A549 (cell line): ENCODE measurements at regions of chr14 and their contacts with region 1.

Region 1: GRCh38 chr14:56491299-56492285 is 88.0 kb upstream of the TMEM260 start:
- DNase-seq: peak; percentile 21 to 72
- ATAC-seq: peak; percentile 70 to 84
- H3K4me3 ChIP-seq: no peak overlapping the region
- H3K27ac ChIP-seq: no peak overlapping the region
- H3K4me1 ChIP-seq: no peaks in the 10 kb centered on the region
- CTCF ChIP-seq: peak; percentile 76
- EP300 ChIP-seq: no peak
- POLR2A ChIP-seq: no peak
- RAD21 ChIP-seq: peak; percentile 70 to 75

Region 2: GRCh38 chr14:56271970-56272369 is 219.6 kb before region 1 on chr14:
- CTCF ChIA-PET with region 1: no interaction called
- POLR2A ChIA-PET with region 1: no interaction called
- DNase-seq: no peak
- ATAC-seq: peak in 1 of 2 experiments; percentile 48; a peak in 1 of 6 replicates
- H3K4me3 ChIP-seq: no peak overlapping the region
- H3K27ac ChIP-seq: 0 out of 6 replicates have a peak overlapping the region, but pooled peaks of 1 of the 2 experiments have one; percentile 12
- H3K4me1 ChIP-seq: peaks cover 15% of the 10 kb centered on the region
- CTCF ChIP-seq: no peak
- EP300 ChIP-seq: no peak
- POLR2A ChIP-seq: no peak
- RAD21 ChIP-seq: no peak

Region 3: GRCh38 chr14:56412468-56413434 is 78.8 kb before region 1 on chr14:
- CTCF ChIA-PET with region 1: no interaction called
- POLR2A ChIA-PET with region 1: no interaction called
- DNase-seq: no peak
- ATAC-seq: no peak
- H3K4me3 ChIP-seq: no peak overlapping the region
- H3K27ac ChIP-seq: no peak overlapping the region
- H3K4me1 ChIP-seq: no peaks in the 10 kb centered on the region
- CTCF ChIP-seq: no peak
- EP300 ChIP-seq: no peak
- POLR2A ChIP-seq: no peak
- RAD21 ChIP-seq: no peak

Region 4: GRCh38 chr14:56474419-56475022 is 17.1 kb before region 1 on chr14:
- CTCF ChIA-PET with region 1: interaction called, 66 read pairs
- POLR2A ChIA-PET with region 1: no interaction called
- DNase-seq: peak; percentile 19 to 37
- ATAC-seq: peak; percentile 30 to 73; a peak in 4 of 6 replicates
- H3K4me3 ChIP-seq: no peak overlapping the region
- H3K27ac ChIP-seq: no peak overlapping the region
- H3K4me1 ChIP-seq: no peaks in the 10 kb centered on the region
- CTCF ChIP-seq: peak; percentile 90
- EP300 ChIP-seq: no peak
- POLR2A ChIP-seq: no peak
- RAD21 ChIP-seq: peak; percentile 90 to 92

Region 5: GRCh38 chr14:56501909-56502530 is 10.4 kb after region 1 on chr14:
- CTCF ChIA-PET with region 1: interaction called, 25 read pairs
- POLR2A ChIA-PET with region 1: no interaction called
- DNase-seq: no peak
- ATAC-seq: no peak
- H3K4me3 ChIP-seq: no peak overlapping the region
- H3K27ac ChIP-seq: no peak overlapping the region
- H3K4me1 ChIP-seq: no peaks in the 10 kb centered on the region
- CTCF ChIP-seq: no peak
- EP300 ChIP-seq: no peak
- POLR2A ChIP-seq: no peak
- RAD21 ChIP-seq: no peak

Region 6: GRCh38 chr14:56524971-56525677 is 33.5 kb after region 1 on chr14:
- CTCF ChIA-PET with region 1: interaction called, 10 read pairs
- POLR2A ChIA-PET with region 1: no interaction called
- DNase-seq: no peak
- ATAC-seq: no peak
- H3K4me3 ChIP-seq: no peak overlapping the region
- H3K27ac ChIP-seq: no peak overlapping the region
- H3K4me1 ChIP-seq: no peaks in the 10 kb centered on the region
- CTCF ChIP-seq: no peak
- EP300 ChIP-seq: no peak
- POLR2A ChIP-seq: no peak
- RAD21 ChIP-seq: no peak

Region 7: GRCh38 chr14:57182760-57183503 is 691.3 kb after region 1 on chr14:
- CTCF ChIA-PET with region 1: interaction called, 13 read pairs
- POLR2A ChIA-PET with region 1: no interaction called
- DNase-seq: peak in 1 of 2 experiments; percentile 34
- ATAC-seq: peak in 1 of 2 experiments; percentile 71; a peak in 3 of 6 replicates
- H3K4me3 ChIP-seq: no peak overlapping the region
- H3K27ac ChIP-seq: no peak overlapping the region
- H3K4me1 ChIP-seq: no peaks in the 10 kb centered on the region
- CTCF ChIP-seq: peak; percentile 43
- EP300 ChIP-seq: no peak
- POLR2A ChIP-seq: no peak
- RAD21 ChIP-seq: peak; percentile 57 to 66

Region 8: GRCh38 chr14:57297852-57298251 is 806.3 kb after region 1 on chr14:
- CTCF ChIA-PET with region 1: interaction called, 12 read pairs
- POLR2A ChIA-PET with region 1: no interaction called
- DNase-seq: no peak
- ATAC-seq: no peak
- H3K4me3 ChIP-seq: no peak overlapping the region
- H3K27ac ChIP-seq: no peak overlapping the region
- H3K4me1 ChIP-seq: no peaks in the 10 kb centered on the region
- CTCF ChIP-seq: no peak
- EP300 ChIP-seq: no peak
- POLR2A ChIP-seq: no peak
- RAD21 ChIP-seq: no peak